ENCODE measurements at regions of chr9 and their contacts with region 1.

Region 1: GRCh38 chr9:70398145-70398556 is 16.3 kb downstream of the KLF9 start:
- DNase-seq: peak in 6 of 9 donors; percentile 45 to 69 (median 56)
- ATAC-seq: peak; percentile 95
- H3K4me3 ChIP-seq: peak overlapping the region; percentile 3
- H3K4me3 Mint-ChIP-seq: peak overlapping the region; percentile 13 to 85 (median 74)
- H3K27ac ChIP-seq: peak overlapping the region; percentile 50
- H3K27ac Mint-ChIP-seq: peak overlapping the region; percentile 49 to 91 (median 84)
- H3K4me1 ChIP-seq: peaks cover 40 to 68% of the 10 kb centered on the region in 2 donors
- H3K4me1 Mint-ChIP-seq: peaks cover 50 to 88% (median 78%) of the 10 kb centered on the region in 7 donors
- H3K27me3 ChIP-seq: no peaks in the 10 kb centered on the region
- H3K27me3 Mint-ChIP-seq: no peaks in the 10 kb centered on the region

Region 2: GRCh38 chr9:70385426-70385825 is 12.7 kb before region 1 on chr9:
- CTCF ChIA-PET with region 1: interaction called, 3 read pairs
- POLR2A ChIA-PET with region 1: interaction called, 3 read pairs
- intact Hi-C with region 1: loop called in 1 of 2 experiments (anchors 1 kb)
- DNase-seq: no peak
- ATAC-seq: no peak
- H3K4me3 ChIP-seq: no peak overlapping the region
- H3K4me3 Mint-ChIP-seq: no peak overlapping the region
- H3K27ac ChIP-seq: no peak overlapping the region
- H3K27ac Mint-ChIP-seq: no peak overlapping the region
- H3K4me1 ChIP-seq: peaks cover 0 to 16% of the 10 kb centered on the region in 2 donors
- H3K4me1 Mint-ChIP-seq: peaks cover 11 to 68% (median 53%) of the 10 kb centered on the region in 7 donors
- H3K27me3 ChIP-seq: no peaks in the 10 kb centered on the region
- H3K27me3 Mint-ChIP-seq: no peaks in the 10 kb centered on the region